ENCODE measurements at regions of chr18 and their contacts with region 1.

Region 1: DNA sequence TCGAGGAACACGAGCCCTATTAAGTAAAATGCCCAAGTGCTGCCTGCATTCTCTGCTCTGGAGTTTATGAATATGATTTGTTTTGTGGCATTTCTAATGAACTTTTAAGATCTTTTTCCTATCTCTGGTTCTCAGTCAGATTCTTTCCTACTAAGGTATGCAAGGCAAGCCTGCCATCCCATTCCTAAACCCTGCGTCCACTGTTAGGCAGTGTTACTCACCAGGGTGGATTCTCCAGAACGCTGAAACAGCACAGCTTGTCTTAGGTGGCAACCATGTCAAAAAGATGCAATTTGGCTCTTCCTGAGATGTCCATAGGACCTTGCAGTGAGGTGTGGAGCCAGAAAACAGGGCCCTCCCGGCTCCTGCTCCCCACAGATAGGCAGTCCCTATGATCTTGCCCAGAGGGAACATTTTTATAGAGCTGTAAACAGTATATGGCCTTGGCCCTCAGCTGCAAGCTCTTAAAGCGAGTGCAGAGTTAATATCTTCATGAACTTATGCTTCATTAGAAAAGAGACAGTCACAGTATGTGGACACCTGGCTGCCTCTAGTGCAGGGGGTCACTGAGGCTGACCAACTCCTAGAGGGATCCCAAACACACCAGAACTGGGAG is 84.4 kb downstream of the TPGS2 start:
- DNase-seq: peak; percentile 27
- H3K4me3 ChIP-seq: no peak overlapping the region
- H3K27ac ChIP-seq: peak overlapping the region; percentile 31
- H3K27me3 ChIP-seq: no peaks in the 10 kb centered on the region
- CTCF ChIP-seq: no peak

Region 2: DNA sequence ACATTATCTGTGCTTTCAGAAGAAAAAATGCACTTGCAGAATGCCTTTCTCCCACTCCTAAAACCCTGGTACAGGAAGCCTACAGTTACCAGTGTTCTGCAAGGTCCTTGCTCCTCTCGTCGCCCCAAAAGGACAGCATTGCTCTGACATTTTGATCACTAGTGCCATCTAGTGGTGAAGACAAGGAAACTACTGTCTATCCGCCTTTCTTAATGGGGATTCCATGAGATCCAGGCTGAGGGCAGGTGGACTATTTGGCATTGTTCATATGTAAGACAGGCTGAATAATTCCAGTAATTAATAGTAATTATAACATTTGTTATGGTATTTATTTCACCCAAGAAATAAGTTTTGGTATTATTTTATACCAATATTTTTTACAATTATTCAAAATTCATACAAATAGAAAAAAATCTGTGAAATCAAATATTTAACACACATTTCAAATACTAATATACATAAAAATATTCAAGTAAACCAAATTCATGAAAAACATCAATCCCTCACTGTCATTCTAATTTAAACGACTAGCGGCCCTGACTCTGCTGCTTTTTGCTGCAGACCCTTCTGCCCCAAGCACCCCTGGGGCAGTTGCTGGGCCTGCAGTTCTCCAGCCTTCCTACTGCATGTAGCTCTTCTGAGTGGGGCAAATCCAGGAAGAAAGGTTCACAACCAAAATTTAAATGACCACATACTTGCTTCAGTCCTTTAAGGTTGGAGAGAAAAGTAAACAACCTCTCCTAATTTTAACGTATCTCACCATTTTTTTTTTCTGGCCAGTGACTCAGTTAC is 65.4 kb after region 1 on chr18:
- CTCF ChIA-PET with region 1: no interaction called
- POLR2A ChIA-PET with region 1: no interaction called
- DNase-seq: no peak
- H3K4me3 ChIP-seq: no peak overlapping the region
- H3K27ac ChIP-seq: no peak overlapping the region
- H3K27me3 ChIP-seq: no peaks in the 10 kb centered on the region
- CTCF ChIP-seq: peak; percentile 82

Region 3: DNA sequence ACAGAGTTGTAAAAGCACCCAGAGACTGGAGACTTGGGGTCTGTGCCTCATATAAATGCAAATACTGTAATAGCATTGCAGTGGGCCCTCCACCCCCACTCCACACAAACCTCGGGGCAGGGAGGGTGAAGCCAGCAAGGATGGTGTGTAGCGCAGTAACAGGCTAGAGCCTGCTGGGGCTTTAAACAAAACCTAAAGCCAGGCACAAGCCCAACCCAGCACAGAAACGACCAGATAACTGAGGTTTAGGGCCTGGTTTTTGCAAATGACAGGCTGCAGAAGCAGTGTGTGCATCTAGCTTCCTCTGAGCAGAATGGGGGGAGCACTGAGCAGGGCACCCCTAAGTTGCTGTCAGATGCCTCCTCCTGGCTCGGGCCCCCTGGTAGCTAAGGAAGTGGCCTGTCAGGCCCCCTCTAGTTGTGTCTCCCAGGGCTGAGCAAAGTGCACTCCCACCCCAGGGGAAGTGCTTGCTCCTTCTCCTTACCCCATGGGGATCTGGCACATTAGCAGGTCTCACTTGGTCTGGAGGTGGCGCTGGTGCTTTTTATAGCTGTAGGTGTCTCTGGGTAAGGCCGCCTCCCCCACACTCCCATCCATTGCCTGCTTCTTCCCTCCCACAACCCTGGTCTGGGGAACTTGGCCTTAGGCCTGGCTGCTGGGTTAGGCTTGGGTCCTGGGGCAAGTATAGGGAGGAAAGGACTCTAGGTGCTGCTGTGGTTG is 686.1 kb after region 1 on chr18:
- CTCF ChIA-PET with region 1: interaction called, 11 read pairs
- POLR2A ChIA-PET with region 1: no interaction called
- DNase-seq: no peak
- H3K4me3 ChIP-seq: no peak overlapping the region
- H3K27ac ChIP-seq: no peak overlapping the region
- H3K27me3 ChIP-seq: peaks cover 2% of the 10 kb centered on the region
- CTCF ChIP-seq: no peak